Activated CD4-positive, alpha-beta T cell treated with anti-CD3 and anti-CD28 coated beads for 36 hours (primary cell): ENCODE measurements at regions of chrX and their contacts with region 1.

Region 1: GRCh38 chrX:149286940-149287349 is 218.2 kb downstream of the IDS start:
- DNase-seq: peak; percentile 63
- ATAC-seq: peak; percentile 24
- H3K4me3 Mint-ChIP-seq: no peak overlapping the region
- H3K27ac Mint-ChIP-seq: no peak overlapping the region
- H3K4me1 Mint-ChIP-seq: peaks cover 25% of the 10 kb centered on the region
- H3K27me3 Mint-ChIP-seq: no peaks in the 10 kb centered on the region

Region 2: DNA sequence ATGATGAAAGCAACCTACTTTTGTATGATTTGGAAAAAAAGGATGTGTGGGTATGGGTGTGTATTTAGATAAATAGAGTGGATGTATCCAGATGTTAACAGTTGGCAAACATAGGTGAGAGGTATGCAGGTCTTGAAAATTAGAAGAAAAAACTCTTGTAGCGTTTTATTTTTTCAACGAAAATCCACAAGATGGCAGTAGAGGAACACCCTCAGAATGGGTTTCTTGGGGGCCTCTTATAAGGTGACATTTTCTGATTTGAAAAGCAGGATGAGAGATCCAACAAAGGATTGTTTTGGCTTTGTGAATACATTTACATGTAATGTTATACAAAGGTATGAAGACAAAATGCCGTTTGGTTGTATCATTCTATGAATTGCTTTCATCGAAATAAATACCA is 1237.5 kb before region 1 on chrX:
- CTCF ChIA-PET with region 1: interaction called, 3 read pairs
- POLR2A ChIA-PET with region 1: no interaction called
- intact Hi-C with region 1: loop called (anchors 1 to 5 kb)
- DNase-seq: no peak
- ATAC-seq: no peak
- H3K4me3 Mint-ChIP-seq: no peak overlapping the region
- H3K27ac Mint-ChIP-seq: no peak overlapping the region
- H3K4me1 Mint-ChIP-seq: no peaks in the 10 kb centered on the region
- H3K27me3 Mint-ChIP-seq: no peaks in the 10 kb centered on the region

Region 3: GRCh38 chrX:148380650-148381561 is 906.0 kb before region 1 on chrX:
- CTCF ChIA-PET with region 1: no interaction called
- POLR2A ChIA-PET with region 1: no interaction called
- intact Hi-C with region 1: loop called in 1 of 2 experiments (anchors 5 kb)
- DNase-seq: peak; percentile 66
- ATAC-seq: peak; percentile 96
- H3K4me3 Mint-ChIP-seq: peak overlapping the region; percentile 62
- H3K27ac Mint-ChIP-seq: peak overlapping the region; percentile 93
- H3K4me1 Mint-ChIP-seq: peaks cover 32% of the 10 kb centered on the region
- H3K27me3 Mint-ChIP-seq: no peaks in the 10 kb centered on the region

Region 4: DNA sequence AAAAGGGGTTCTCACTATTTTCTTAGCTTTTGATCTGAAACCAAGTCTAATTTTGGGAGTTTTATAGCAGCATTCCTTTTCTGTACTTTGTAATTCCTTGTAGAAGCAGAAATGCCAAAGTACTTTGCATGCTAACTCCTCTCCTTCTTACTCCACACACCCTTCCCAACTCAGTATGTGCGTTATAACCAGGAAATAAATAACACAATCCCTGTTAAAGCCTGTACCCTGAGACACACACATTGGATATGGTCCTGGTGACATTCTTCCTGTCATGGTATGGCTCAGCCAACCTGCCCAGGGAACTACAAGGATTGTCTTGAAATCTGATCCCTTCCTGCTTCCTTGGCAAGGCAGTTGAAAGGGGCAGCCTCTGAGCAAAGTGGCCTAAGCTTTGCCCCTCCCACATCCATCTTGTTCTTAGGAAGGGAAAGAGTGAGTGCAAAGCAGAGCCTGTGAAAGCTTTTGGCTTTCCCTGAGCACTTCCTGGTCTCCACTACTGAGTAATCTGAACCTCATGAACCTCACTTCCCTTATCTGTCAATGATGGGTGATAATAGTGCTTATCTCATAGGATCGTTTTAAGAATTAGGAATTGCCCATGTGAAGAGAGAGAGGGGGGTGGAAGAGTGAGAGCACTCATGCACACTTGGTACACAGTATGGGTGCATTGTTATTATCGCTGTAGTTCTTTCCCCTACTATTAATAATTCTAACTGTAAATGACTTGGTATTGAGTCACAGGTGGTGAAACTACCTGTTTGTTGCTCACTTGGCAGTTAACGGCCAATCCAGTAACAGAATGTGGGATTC is 677.2 kb before region 1 on chrX:
- CTCF ChIA-PET with region 1: no interaction called
- POLR2A ChIA-PET with region 1: no interaction called
- intact Hi-C with region 1: loop called in 1 of 2 experiments (anchors 10 kb)
- DNase-seq: peak; percentile 3
- ATAC-seq: peak; percentile 76
- H3K4me3 Mint-ChIP-seq: no peak overlapping the region
- H3K27ac Mint-ChIP-seq: no peak overlapping the region
- H3K4me1 Mint-ChIP-seq: peaks cover 24% of the 10 kb centered on the region
- H3K27me3 Mint-ChIP-seq: no peaks in the 10 kb centered on the region

Region 5: DNA sequence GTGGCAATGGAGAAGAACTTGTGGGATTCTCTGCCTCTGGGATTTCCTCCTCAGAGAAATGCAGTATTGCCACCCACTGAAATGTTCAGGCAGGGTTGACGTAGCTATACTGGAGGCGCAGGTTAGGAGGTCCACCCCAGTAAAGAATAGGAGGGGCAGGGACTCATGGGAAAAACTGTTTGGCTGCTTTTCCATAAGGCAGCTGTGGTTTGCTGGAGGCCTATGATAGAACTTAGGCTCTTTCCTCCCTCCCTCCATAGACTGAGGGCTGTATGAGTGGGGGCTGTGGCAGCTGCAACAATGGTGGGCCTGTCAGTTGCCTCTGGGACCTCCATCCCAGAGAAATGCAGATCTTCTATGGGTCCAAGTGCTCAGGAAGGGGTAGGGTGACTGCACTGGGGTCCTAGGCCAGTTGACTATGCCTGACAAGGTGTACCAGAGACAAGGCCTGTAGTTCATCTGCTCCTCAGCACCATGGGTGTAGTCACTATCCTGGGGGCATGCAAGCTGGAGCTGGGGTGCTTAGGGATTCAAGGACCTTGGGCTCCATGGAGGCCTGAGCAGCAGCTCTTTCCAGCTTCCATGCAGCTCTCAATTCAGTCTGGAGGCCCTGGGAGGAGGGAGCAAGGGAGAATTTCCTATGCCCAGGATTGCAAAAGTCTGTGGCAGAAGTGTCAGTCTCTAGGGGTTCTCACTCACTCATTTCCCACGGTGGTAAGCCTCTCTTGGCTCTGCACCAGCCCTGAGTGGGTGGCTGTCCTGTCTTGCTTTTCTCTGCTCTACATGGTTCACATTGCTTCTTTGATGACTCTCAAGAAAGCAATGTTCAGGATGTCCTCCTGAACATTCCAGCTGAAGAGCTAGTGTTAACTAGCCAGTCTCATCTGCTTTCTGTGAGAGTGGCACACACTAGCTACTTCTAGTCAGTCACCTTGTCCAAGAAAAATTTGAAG is 134.9 kb before region 1 on chrX:
- CTCF ChIA-PET with region 1: interaction called, 3 read pairs
- POLR2A ChIA-PET with region 1: no interaction called
- intact Hi-C with region 1: loop called in 1 of 2 experiments (anchors 2 kb)
- DNase-seq: no peak
- ATAC-seq: no peak
- H3K4me3 Mint-ChIP-seq: no peak overlapping the region
- H3K27ac Mint-ChIP-seq: no peak overlapping the region
- H3K4me1 Mint-ChIP-seq: peaks cover 2% of the 10 kb centered on the region
- H3K27me3 Mint-ChIP-seq: no peaks in the 10 kb centered on the region

Region 6: DNA sequence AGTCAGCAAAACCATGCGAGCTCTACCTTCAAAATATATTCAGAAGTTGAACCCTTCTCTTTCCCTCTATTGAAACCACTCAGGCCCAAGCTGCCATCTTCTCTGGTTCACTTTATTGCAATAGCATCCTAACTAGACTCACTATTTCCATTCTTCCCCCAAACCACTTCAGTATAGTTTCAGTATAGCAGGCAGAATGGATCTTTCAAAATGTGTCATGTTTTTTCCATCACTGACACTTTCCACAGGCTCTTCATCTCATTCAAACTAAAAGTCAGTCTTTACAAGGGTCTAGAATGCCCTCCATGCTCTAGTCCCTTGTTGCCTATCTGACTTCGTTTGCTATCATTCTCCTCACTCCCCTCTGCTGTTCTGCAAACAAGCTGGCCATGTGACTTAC is 56.3 kb before region 1 on chrX:
- CTCF ChIA-PET with region 1: no interaction called
- POLR2A ChIA-PET with region 1: interaction called, 3 read pairs
- intact Hi-C with region 1: loop called (anchors 1 to 5 kb)
- DNase-seq: peak; percentile 13
- ATAC-seq: peak; percentile 85
- H3K4me3 Mint-ChIP-seq: no peak overlapping the region
- H3K27ac Mint-ChIP-seq: no peak overlapping the region
- H3K4me1 Mint-ChIP-seq: peaks cover 11% of the 10 kb centered on the region
- H3K27me3 Mint-ChIP-seq: peaks cover 2% of the 10 kb centered on the region

Region 7: DNA sequence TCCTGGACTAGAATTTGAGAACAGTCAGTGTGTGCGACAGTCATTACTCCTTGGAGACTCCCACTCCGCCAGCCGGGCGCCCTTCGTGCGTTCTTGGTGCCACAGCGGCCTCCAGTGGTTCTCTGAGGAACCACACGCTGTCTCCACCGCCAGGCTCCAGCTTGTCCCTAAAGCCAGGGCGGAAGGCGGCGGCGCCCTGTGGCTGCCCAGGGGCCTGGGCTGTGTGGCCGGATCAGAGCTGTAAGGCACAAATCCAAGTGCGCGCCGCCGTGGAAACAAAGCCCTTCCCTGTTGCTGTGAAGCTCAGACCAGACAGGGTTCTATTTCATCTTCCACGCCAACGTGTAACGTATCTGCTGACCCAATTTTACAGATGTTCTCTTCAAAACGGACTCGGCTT is 184.0 kb after region 1 on chrX:
- CTCF ChIA-PET with region 1: interaction called, 5 read pairs
- POLR2A ChIA-PET with region 1: no interaction called
- intact Hi-C with region 1: loop called (anchors 5 to 10 kb)
- DNase-seq: peak; percentile 83
- ATAC-seq: peak; percentile 92
- H3K4me3 Mint-ChIP-seq: no peak overlapping the region
- H3K27ac Mint-ChIP-seq: no peak overlapping the region
- H3K4me1 Mint-ChIP-seq: peaks cover 2% of the 10 kb centered on the region
- H3K27me3 Mint-ChIP-seq: no peaks in the 10 kb centered on the region